HepG2 (cell line): ENCODE measurements at regions of chr7 and their contacts with region 1.

Region 1: GRCh38 chr7:102951839-102952238 is 39.0 kb downstream of the LRRC17 start:
- DNase-seq: no peak
- ATAC-seq: no peak
- H3K4me3 ChIP-seq: no peak overlapping the region
- H3K27ac ChIP-seq: no peak overlapping the region
- H3K4me1 ChIP-seq: no peaks in the 10 kb centered on the region
- H3K27me3 ChIP-seq: no peaks in the 10 kb centered on the region
- CTCF ChIP-seq: no peak
- EP300 ChIP-seq: no peak
- POLR2A ChIP-seq: no peak
- RAD21 ChIP-seq: no peak

Region 2: GRCh38 chr7:102933763-102934162 is 18.1 kb before region 1 on chr7:
- CTCF ChIA-PET with region 1: no interaction called
- POLR2A ChIA-PET with region 1: no interaction called
- in situ Hi-C with region 1: no loop called
- intact Hi-C with region 1: no loop called
- DNase-seq: no peak
- ATAC-seq: no peak
- H3K4me3 ChIP-seq: no peak overlapping the region
- H3K27ac ChIP-seq: no peak overlapping the region
- H3K4me1 ChIP-seq: no peaks in the 10 kb centered on the region
- H3K27me3 ChIP-seq: no peaks in the 10 kb centered on the region; a peak in 1 of 5 replicates
- CTCF ChIP-seq: no peak
- EP300 ChIP-seq: no peak
- POLR2A ChIP-seq: no peak
- RAD21 ChIP-seq: no peak

Region 3: DNA sequence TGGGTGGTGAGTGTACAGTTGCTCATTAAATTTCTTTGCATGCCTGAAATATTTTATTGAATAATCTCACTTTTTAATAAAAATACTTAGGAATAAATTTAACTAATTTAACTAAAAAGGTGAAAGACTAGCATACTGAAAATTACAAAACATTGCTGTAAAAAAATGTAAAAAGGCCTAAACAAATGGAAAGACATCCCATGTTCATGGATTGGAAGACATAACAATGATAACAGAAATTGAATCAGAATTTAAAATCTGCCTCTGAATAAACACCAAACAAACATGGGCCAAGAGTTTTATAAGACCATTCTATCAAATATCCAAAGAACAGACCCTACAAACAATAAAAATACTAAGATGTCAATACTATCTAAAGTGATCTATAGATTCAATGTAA is 27.8 kb after region 1 on chr7:
- CTCF ChIA-PET with region 1: no interaction called
- POLR2A ChIA-PET with region 1: no interaction called
- in situ Hi-C with region 1: no loop called
- intact Hi-C with region 1: loop called (anchors 1 kb)
- DNase-seq: no peak
- ATAC-seq: no peak
- H3K4me3 ChIP-seq: no peak overlapping the region
- H3K27ac ChIP-seq: no peak overlapping the region
- H3K4me1 ChIP-seq: no peaks in the 10 kb centered on the region
- H3K27me3 ChIP-seq: no peaks in the 10 kb centered on the region; a peak in 1 of 5 replicates
- CTCF ChIP-seq: no peak
- EP300 ChIP-seq: no peak
- POLR2A ChIP-seq: no peak
- RAD21 ChIP-seq: no peak

Region 4: DNA sequence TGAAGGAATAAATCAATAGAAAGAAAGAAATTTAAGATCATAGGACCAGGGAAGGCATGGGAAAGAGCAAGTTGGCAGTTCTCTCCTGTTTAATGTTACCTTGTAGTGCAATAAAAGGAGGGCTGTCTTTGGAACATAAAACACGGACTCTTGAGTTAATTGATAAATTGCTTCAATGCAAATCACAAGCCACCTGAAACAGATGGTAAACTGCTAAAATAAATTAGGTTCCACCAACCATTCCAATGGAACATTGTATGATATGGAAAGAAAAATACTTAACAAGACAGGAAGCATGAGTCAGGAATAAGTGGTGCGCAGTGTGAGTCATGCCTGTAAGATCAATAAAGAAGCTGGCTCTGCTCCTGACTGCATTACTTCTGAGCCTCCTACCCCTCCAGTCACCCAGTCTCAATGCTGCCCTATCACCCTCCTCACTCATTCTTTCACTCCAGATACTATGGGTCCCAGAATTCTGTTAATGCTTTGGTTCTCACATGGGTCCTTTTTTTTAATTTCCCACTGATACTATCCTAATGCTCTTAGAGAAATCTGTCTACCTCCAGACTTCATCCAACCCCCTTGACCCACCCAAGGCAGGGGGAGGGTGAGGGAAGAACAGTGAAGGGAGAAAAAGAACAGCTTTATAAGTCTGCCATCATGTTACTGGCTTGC is 39.8 kb after region 1 on chr7:
- CTCF ChIA-PET with region 1: no interaction called
- POLR2A ChIA-PET with region 1: no interaction called
- in situ Hi-C with region 1: no loop called
- intact Hi-C with region 1: no loop called
- DNase-seq: peak; percentile 71
- ATAC-seq: peak; percentile 86
- H3K4me3 ChIP-seq: no peak overlapping the region
- H3K27ac ChIP-seq: no peak overlapping the region
- H3K4me1 ChIP-seq: peaks cover 53% of the 10 kb centered on the region
- H3K27me3 ChIP-seq: no peaks in the 10 kb centered on the region
- CTCF ChIP-seq: no peak
- EP300 ChIP-seq: peak in 1 of 2 experiments; percentile 52; a peak in 1 of 4 replicates
- POLR2A ChIP-seq: no peak
- RAD21 ChIP-seq: no peak

Region 5: GRCh38 chr7:103240806-103241205 is 289.0 kb after region 1 on chr7:
- CTCF ChIA-PET with region 1: no interaction called
- POLR2A ChIA-PET with region 1: no interaction called
- in situ Hi-C with region 1: no loop called
- intact Hi-C with region 1: no loop called
- DNase-seq: no peak
- ATAC-seq: no peak
- H3K4me3 ChIP-seq: no peak overlapping the region
- H3K27ac ChIP-seq: no peak overlapping the region
- H3K4me1 ChIP-seq: no peaks in the 10 kb centered on the region
- H3K27me3 ChIP-seq: no peaks in the 10 kb centered on the region
- CTCF ChIP-seq: no peak
- EP300 ChIP-seq: no peak
- POLR2A ChIP-seq: no peak
- RAD21 ChIP-seq: no peak